ENCODE measurements at regions of chr15 and their contacts with region 1.

Region 1: DNA sequence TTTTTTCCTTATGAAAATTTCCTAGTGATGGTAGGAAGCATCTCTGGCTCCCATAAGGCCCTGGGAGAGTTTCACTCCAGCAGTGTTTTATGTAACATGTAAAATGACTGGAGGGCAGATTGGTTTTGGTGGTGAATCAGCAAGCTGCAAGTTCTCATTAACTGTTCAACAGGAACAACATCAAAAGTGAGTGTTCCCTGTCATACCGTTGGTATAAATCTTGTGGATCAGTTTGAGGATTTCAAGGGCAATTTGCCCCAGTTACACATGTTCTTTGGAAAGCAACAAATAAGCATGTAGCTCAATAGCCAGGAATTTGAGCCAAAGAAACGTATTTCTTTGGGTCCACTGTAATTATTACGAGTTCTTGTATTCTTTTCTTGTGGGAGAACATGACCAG is 345.7 kb downstream of the SV2B start:
- H3K4me3 Mint-ChIP-seq: no peak overlapping the region
- H3K27ac Mint-ChIP-seq: no peak overlapping the region
- H3K4me1 Mint-ChIP-seq: no peaks in the 10 kb centered on the region
- H3K27me3 Mint-ChIP-seq: peaks cover 1% of the 10 kb centered on the region

Region 2: DNA sequence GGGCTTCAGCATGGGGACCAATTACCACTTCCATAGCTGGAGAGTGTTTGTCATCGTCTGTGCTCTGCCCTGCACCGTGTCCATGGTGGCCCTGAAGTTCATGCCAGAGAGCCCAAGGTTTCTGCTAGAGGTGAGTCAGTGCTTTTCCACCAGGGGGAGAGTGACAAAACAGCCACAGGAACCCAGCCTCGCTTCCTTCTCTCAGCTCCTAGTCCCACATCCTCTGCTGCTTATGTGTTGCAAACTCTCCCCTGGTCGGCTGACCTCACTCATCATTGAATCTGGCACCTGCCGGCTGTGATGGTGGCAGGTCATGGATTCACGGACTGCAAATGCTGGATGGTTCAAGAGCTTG is 187.4 kb before region 1 on chr15:
- intact Hi-C with region 1: no loop called
- H3K4me3 Mint-ChIP-seq: no peak overlapping the region
- H3K27ac Mint-ChIP-seq: peak overlapping the region; percentile 46
- H3K4me1 Mint-ChIP-seq: peaks cover 46% of the 10 kb centered on the region
- H3K27me3 Mint-ChIP-seq: no peaks in the 10 kb centered on the region

Region 3: DNA sequence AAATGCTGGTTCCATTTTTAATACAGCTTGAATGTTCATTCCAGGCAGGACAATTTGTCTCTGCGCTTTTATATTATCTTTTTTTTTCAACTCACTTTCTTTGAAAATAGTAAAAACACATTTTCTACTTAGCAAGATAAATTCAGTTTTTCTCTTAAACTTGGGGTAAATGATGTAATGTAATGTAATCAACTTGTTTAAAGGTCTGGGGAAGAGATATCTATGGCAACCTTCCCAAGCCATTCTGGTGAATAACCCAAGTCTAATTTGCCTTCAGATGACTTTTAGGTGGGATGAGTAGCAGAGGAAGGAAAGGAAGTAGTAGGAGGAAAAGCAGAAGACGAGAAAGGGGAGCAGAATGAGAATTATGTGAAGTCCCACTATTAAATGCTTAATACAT is 10.6 kb before region 1 on chr15:
- intact Hi-C with region 1: loop called (anchors 1 kb)
- H3K4me3 Mint-ChIP-seq: no peak overlapping the region
- H3K27ac Mint-ChIP-seq: no peak overlapping the region
- H3K4me1 Mint-ChIP-seq: no peaks in the 10 kb centered on the region
- H3K27me3 Mint-ChIP-seq: no peaks in the 10 kb centered on the region

Measured in dendritic cell treated with granulocyte-macrophage colony-stimulating factor and Interleukin-4, amounts not matched to agents 40 ng/mL and 50 ng/mL, for 4 days (primary cell).